Activated CD4-positive, alpha-beta T cell treated with anti-CD3 and anti-CD28 coated beads for 36 hours (primary cell): ENCODE measurements at regions of chr14 and their contacts with region 1.

Region 1: DNA sequence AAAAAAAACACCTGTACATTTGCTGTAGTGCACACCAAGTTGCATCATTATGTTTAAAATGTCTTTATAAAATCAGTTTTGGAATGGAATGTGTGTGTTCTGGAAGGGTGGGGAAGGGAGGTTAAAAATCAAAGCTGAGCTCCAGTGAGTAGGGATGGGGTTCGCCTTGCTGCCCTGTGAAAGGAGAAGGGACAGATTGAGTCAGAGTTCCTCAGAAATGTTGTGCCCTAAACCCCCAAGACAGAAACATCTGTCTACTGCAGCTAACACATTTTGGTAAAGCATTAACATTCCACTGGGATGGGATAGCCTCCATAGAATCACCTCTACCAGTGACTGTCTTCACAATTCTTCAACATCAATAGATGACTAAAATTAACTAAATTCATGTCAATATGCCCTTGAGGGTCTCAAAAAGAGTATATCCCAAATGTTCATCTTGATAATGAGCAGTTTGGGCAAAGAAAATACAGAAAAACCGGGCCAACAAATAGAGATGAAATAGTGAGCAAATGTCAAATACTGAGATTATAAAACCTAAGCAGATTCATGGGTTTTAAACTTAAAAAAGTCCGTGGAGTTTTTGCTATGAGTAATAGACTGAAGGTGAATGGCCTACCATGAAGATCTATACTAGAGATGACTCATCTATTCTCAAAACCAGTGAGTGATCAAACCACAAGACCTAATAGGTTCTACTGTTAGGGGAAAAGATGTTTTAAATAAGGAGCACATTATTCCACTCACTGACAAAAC is 5.4 kb downstream of the HNRNPC start:
- DNase-seq: no peak
- ATAC-seq: peak; percentile 67
- H3K4me3 Mint-ChIP-seq: peak overlapping the region; percentile 93
- H3K27ac Mint-ChIP-seq: peak overlapping the region; percentile 96
- H3K4me1 Mint-ChIP-seq: peaks cover 67% of the 10 kb centered on the region
- H3K27me3 Mint-ChIP-seq: no peaks in the 10 kb centered on the region

Region 2: GRCh38 chr14:20317720-20318119 is 946.1 kb before region 1 on chr14:
- CTCF ChIA-PET with region 1: no interaction called
- POLR2A ChIA-PET with region 1: no interaction called
- intact Hi-C with region 1: no loop called
- DNase-seq: no peak
- ATAC-seq: no peak
- H3K4me3 Mint-ChIP-seq: no peak overlapping the region
- H3K27ac Mint-ChIP-seq: no peak overlapping the region
- H3K4me1 Mint-ChIP-seq: no peaks in the 10 kb centered on the region
- H3K27me3 Mint-ChIP-seq: no peaks in the 10 kb centered on the region

Region 3: DNA sequence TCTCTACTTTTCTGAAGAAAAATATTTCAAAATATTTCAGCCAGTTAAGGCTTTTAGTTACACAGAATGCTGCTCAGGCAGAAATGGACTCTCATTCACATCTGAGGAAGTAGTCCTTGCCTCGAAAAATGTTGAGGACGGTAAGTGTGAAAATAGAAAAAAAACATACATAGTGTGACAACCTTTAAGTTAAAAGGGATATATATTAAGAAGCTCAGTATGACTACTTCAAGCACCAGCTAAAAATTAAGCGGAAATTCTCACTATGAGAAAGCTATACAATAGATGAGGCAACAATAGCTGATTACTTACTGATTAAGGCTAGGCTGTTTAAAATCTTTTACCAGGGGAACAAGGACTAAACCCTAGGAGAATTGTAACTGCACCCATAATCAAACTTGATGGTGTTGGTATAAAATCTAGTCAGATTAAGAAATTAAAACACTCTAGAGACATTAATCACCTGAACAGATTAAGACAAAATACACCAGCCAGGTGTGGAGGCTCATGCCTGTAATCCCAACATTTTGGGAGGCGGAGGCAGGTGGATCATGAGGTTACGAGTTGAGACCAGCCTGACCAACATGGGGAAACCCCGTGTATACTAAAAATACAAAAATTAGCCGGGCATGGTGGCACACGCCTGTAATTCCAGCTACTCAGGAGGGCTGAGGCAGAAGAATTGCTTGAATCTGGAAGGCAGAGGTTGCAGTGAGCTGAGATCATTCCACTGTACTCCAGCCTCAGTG is 48.5 kb before region 1 on chr14:
- CTCF ChIA-PET with region 1: interaction called, 5 read pairs
- POLR2A ChIA-PET with region 1: interaction called, 16 read pairs
- intact Hi-C with region 1: loop called (anchors 2 kb)
- DNase-seq: no peak
- ATAC-seq: peak; percentile 56
- H3K4me3 Mint-ChIP-seq: peak overlapping the region; percentile 23
- H3K27ac Mint-ChIP-seq: peak overlapping the region; percentile 73
- H3K4me1 Mint-ChIP-seq: peaks cover 74% of the 10 kb centered on the region
- H3K27me3 Mint-ChIP-seq: no peaks in the 10 kb centered on the region

Region 4: DNA sequence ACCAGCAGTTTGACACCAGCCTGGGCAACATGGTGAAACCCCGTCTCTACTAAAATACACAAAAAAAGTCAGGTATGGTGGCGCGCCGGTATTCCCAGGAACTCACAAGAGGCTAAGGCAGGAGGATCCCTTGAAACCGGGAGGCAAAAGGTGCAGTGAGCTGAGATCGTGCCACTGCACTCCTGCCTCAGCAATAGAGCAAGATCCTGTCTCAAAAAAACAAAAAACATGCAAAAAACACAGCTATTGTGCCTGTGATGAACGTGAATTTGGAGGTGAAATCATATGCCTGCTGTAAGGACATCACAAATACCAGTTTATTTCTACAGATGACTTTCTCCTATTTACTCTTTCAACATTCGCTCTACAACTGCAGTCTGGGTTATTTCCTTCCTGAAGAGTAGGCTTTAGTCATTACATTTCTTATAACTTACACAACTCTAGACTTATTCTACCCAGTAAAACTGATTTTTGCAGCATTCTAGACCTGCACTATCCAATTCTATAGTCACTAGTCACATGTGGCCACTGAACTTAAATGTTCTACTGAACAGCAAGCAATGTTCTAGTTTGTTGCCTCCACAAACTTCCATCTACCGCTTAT is 42.9 kb before region 1 on chr14:
- CTCF ChIA-PET with region 1: interaction called, 5 read pairs
- POLR2A ChIA-PET with region 1: interaction called, 16 read pairs
- intact Hi-C with region 1: loop called (anchors 2 kb)
- DNase-seq: no peak
- ATAC-seq: peak; percentile 68
- H3K4me3 Mint-ChIP-seq: peak overlapping the region; percentile 27
- H3K27ac Mint-ChIP-seq: peak overlapping the region; percentile 92
- H3K4me1 Mint-ChIP-seq: peaks cover 88% of the 10 kb centered on the region
- H3K27me3 Mint-ChIP-seq: no peaks in the 10 kb centered on the region

Region 5: DNA sequence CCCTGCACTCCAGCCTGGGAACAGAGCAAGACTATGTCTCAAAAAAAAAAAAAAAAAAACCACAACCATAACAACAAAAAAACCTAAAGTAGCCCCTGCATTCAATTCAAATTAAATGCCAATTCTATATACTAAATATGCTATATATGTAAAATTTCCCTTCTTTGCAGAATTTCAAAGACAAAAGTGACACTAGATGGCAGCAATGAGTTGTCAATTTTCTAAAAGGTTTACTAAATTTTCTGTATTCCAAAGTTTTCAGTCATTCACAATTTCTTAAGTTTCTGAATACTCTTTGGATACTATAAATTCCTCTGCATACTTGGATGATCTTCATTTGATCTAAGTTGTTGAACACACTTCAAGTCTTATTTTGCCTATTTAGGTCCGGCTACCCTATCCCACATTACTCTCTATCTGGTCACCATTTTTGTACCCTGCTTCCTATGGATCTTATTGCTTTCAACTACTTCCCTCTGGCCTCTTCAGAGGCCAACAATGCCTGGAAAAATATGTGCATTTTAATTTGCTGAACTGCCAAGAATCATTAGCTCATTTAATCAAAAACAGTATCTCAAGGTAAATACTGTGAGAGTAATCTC is 22.5 kb before region 1 on chr14:
- CTCF ChIA-PET with region 1: interaction called, 3 read pairs
- POLR2A ChIA-PET with region 1: interaction called, 4 read pairs
- intact Hi-C with region 1: loop called in 1 of 2 experiments (anchors 2 kb)
- DNase-seq: no peak
- ATAC-seq: no peak
- H3K4me3 Mint-ChIP-seq: no peak overlapping the region
- H3K27ac Mint-ChIP-seq: peak overlapping the region; percentile 75
- H3K4me1 Mint-ChIP-seq: peaks cover 77% of the 10 kb centered on the region
- H3K27me3 Mint-ChIP-seq: no peaks in the 10 kb centered on the region

Region 6: DNA sequence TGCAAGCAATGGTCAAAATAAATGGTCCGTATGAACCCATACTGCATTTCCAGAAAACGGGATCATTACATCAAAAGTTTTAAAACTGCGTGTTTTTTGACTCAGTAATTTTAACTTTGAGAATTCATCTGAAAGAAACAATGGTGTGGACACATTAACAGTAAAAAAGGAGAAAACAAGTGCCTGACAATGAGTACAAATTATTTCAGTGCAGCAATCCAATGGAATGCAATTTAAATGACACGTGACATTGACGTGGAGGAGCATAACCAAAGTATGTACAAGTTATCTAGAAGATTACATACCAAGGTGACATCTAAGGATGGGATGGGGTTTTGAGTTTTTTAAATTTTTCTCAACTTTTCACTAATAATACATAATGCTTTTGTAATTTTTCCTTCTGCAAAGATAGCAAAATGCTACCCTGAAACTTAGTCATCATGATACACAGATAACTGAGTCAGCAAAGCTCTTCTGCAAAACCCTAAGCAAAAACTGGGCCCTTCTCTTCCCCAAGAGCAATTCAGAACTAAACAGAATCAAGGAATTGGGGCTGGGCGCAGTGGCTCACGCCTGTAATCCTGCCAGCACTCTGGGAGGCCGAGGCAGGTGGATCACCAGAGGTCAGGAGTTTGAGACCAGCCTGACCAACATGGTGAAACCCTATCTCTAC is 15.0 kb before region 1 on chr14:
- CTCF ChIA-PET with region 1: interaction called, 15 read pairs
- POLR2A ChIA-PET with region 1: interaction called, 28 read pairs
- intact Hi-C with region 1: loop called in 1 of 2 experiments (anchors 2 kb)
- DNase-seq: no peak
- ATAC-seq: no peak
- H3K4me3 Mint-ChIP-seq: no peak overlapping the region
- H3K27ac Mint-ChIP-seq: no peak overlapping the region
- H3K4me1 Mint-ChIP-seq: peaks cover 74% of the 10 kb centered on the region
- H3K27me3 Mint-ChIP-seq: no peaks in the 10 kb centered on the region

Region 7: GRCh38 chr14:21414137-21414631 is 150.3 kb after region 1 on chr14:
- CTCF ChIA-PET with region 1: interaction called, 3 read pairs
- POLR2A ChIA-PET with region 1: no interaction called
- intact Hi-C with region 1: loop called in 1 of 2 experiments (anchors 1 kb)
- DNase-seq: no peak
- ATAC-seq: peak; percentile 91
- H3K4me3 Mint-ChIP-seq: no peak overlapping the region
- H3K27ac Mint-ChIP-seq: peak overlapping the region; percentile 88
- H3K4me1 Mint-ChIP-seq: peaks cover 26% of the 10 kb centered on the region
- H3K27me3 Mint-ChIP-seq: no peaks in the 10 kb centered on the region

Region 8: DNA sequence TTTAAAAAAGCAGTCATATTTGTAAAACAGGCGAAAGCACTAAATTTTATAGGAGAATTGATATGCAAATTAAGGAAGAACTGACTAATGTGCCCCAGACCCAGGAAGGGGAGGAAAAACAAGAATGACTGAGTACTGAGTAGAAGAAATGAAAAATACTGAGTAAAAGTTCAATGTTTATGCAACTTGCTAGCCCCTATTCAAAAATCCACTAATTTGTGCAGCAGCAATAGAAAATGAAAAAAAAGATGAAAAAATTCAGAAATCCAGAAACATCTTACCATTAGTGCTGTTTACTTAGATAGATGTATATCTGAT is 186.0 kb after region 1 on chr14:
- CTCF ChIA-PET with region 1: no interaction called
- POLR2A ChIA-PET with region 1: interaction called, 8 read pairs
- intact Hi-C with region 1: loop called in 1 of 2 experiments (anchors 2 kb)
- DNase-seq: no peak
- ATAC-seq: peak; percentile 51
- H3K4me3 Mint-ChIP-seq: peak overlapping the region; percentile 9
- H3K27ac Mint-ChIP-seq: peak overlapping the region; percentile 77
- H3K4me1 Mint-ChIP-seq: peaks cover 69% of the 10 kb centered on the region
- H3K27me3 Mint-ChIP-seq: no peaks in the 10 kb centered on the region

Region 9: DNA sequence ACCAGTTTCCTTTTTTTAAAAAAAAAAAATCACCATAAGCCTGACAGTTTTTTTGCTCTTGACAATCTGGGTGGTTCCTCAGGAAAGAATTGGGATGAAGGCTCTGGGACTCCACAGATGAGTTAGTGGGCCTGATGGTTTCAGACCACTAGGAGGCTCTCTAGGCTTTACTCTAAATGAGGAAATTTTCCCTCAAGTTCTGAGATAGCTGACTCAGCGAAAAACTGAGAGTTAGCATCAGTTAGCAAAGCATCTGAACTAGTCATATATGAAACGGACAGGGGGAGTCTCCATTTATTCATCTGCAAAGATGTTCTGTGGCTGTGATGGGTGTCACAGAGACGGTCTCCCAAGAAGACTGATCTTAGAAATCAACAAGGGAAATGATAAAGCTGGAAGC is 724.1 kb after region 1 on chr14:
- CTCF ChIA-PET with region 1: no interaction called
- POLR2A ChIA-PET with region 1: no interaction called
- intact Hi-C with region 1: no loop called
- DNase-seq: peak; percentile 25
- ATAC-seq: peak; percentile 72
- H3K4me3 Mint-ChIP-seq: peak overlapping the region; percentile 57
- H3K27ac Mint-ChIP-seq: peak overlapping the region; percentile 86
- H3K4me1 Mint-ChIP-seq: peaks cover 28% of the 10 kb centered on the region
- H3K27me3 Mint-ChIP-seq: peaks cover 2% of the 10 kb centered on the region